HEK293 (cell line): ENCODE measurements at regions of chr12 and their contacts with region 1.

Region 1: DNA sequence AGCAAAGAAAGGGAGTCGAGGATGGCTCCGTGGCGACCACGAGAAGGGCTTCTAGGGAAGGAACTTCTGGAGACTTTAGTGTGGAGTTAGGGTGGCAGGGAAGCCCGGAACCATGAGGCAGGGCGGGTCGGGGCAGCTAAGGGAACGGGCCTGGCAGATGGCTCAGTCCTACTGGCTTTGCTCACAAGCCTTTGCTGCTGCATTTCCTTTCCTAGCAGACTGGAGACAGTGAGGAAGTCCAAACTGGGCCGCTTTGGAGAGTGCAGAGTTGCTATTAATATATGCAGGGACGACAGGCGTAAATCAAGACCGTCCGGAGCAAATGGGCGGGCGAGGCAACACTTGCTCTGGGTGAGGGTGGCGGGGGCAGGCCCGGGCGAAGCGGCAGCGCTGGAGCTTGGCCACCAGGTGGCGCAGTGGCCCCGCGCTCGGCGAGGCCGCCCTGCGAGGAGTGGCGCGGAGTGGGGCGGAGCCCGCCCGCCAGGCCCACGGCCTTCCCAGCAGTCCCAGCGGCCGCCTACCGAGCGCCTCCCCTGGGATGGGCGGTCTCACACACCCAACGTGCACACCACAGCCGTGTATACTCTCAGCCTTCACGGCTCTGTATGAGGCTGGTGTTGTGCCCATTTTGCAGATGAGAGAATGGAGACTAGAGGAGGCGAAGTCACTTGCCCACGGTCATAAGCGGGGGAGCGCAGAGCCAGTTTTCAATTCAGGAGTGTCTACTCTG is 24.4 kb upstream of the LRTM2 start:
- H3K4me3 ChIP-seq: peak overlapping the region; percentile 22
- H3K27ac ChIP-seq: no peak overlapping the region
- H3K4me1 ChIP-seq: no peaks in the 10 kb centered on the region; the same call in 1 of the 2 replicates
- CTCF ChIP-seq: peak; percentile 79

Region 2: GRCh38 chr12:1644534-1645438 is 151.2 kb before region 1 on chr12:
- CTCF ChIA-PET with region 1: interaction called, 259 read pairs
- POLR2A ChIA-PET with region 1: no interaction called
- H3K4me3 ChIP-seq: no peak overlapping the region
- H3K27ac ChIP-seq: no peak overlapping the region
- H3K4me1 ChIP-seq: peaks cover 2% of the 10 kb centered on the region; the same call in 1 of the 2 replicates
- CTCF ChIP-seq: no peak

Region 3: DNA sequence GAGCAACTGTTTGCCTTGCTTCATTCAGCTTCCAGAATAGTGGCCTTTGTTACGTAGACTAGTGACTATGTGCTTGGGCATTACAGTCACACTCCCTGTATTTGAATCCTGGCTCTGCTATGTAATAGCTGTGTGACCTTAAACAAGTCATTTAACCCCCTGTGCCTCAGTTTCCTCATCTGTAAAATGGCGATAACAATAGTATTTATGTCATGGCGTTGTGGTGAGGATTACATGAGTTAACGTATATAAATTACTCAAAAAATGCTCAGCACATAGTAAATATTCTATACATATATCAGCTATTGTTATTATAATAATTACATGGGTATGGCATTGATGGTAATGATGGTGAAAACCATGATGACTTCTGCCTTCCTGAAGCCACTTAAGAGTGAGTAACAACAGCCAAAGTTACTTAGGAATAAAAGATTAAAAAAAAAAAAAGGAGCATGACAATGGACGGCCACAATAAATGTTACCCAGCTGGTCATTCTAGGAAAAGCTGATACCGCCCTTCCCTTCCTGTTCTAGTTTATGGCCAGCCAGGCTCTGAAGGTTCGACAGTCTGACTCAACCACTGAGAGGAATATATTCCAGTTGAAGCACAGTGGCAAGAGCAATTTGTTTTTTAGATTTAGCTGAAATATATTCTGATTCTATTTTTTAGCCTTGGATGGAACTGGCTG is 115.0 kb before region 1 on chr12:
- CTCF ChIA-PET with region 1: interaction called, 10 read pairs
- POLR2A ChIA-PET with region 1: no interaction called
- H3K4me3 ChIP-seq: no peak overlapping the region
- H3K27ac ChIP-seq: no peak overlapping the region
- H3K4me1 ChIP-seq: no peaks in the 10 kb centered on the region
- CTCF ChIP-seq: no peak

Region 4: DNA sequence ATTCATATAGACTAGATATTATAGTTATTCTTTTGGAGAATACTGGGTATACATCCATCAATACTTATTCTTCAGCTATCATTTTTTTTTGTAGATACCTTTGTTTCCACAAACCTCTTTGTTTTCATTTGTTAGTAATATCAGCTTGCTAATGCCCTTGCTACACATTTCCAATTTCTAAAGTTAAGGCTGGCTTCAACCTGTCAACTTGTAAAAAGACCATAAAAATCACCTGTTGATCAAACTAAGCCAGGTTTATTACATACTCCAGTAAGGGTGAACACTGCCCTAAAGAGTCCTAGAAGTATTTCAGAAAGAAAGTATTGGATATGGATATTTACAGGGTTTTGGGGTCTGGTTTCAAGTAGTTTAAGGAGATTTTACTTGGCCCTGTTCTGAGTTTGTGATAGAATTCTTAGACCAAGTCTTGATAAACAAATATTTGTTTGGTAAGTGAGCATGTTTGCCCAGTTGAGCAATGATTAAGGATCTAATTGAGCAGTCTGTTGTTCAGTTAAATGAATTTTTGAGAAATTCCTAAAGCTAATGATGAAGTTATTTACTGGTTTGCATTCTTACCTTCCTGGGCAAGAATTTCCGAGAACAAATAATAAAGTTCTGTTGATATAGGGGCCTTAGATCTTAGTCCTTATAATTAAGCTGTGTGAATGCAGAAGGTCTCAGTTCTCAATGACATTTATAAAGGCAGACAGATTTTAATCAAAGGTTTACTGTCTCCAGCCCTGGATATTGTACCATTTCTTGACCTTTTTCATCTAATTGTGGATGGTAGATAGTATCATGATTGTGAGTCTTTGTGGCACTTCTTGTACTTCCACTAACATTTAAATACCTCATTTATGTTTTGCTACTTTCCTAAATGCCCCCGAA is 28.3 kb before region 1 on chr12:
- CTCF ChIA-PET with region 1: interaction called, 18 read pairs
- POLR2A ChIA-PET with region 1: no interaction called
- H3K4me3 ChIP-seq: no peak overlapping the region
- H3K27ac ChIP-seq: no peak overlapping the region
- H3K4me1 ChIP-seq: peaks cover 7% of the 10 kb centered on the region
- CTCF ChIP-seq: no peak

Region 5: DNA sequence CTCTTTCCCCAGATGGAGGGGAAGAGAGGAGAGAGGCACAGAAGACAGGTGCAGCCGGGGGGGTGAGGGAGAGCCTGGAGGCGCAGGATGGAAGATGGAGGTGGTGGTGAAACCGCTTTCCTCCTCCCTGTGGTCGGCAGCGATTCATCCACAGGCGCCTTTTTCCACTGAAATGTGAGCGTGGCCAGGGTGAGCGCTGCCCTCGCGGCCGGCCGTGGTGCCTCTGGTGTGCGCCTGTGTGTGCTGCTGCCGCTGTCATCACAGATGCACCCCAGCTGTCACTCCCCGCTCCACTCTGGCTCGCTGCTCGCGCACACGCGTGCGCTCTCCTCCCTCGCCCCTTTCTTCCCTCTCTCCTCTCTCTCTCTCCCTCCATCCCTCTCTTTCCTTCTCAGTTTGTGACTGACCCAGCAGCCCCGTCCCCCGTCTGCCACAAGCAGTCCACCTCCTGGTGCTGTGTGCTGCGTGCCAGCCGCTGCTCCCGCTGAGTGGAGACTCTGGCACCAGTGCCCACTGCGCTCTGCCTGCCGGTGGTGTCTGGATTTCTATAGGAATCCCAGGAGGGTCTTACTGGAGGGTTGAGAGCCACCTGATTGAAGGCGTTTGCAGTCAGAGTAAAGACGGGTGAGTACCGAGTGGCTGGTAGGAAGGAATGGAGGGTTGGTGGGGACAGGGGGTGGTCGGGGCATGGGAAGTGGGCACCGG is 24.4 kb after region 1 on chr12 and contains the start of gene LRTM2:
- CTCF ChIA-PET with region 1: no interaction called
- POLR2A ChIA-PET with region 1: no interaction called
- H3K4me3 ChIP-seq: no peak within 1 kb of the TSS
- H3K27ac ChIP-seq: no peak within 1 kb of the TSS
- H3K4me1 ChIP-seq: no peaks in the 10 kb centered on the region
- CTCF ChIP-seq: no peak

Region 6: GRCh38 chr12:2301531-2302461 is 505.8 kb after region 1 on chr12:
- CTCF ChIA-PET with region 1: no interaction called
- POLR2A ChIA-PET with region 1: no interaction called
- H3K4me3 ChIP-seq: no peak overlapping the region
- H3K27ac ChIP-seq: no peak overlapping the region
- H3K4me1 ChIP-seq: 0 out of 2 replicates have a peak, but pooled peaks cover 2% of the 10 kb centered on the region
- CTCF ChIP-seq: no peak